Transverse colon (tissue), 4 donors: ENCODE measurements at regions of chr6 and their contacts with region 1.

Region 1: DNA sequence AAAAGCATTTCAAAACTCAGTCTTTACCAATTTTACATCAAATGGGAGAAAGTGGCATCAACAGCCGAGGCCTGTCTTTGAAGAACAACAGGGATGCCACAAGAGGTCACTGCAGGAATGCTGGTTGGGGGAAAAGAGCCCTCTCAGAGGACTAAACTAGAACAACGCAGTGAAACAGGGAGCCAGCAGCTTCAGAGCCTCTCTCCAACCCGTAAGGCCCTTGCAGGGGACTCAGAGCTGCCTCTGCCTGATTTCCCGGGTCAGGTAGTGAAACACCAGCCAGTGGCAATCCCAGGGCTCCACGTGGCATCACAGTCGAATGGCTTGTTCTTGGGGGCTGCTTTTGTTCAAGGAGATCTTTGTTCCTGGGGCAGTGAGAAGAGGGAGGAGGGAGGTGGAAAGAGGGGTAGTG is 55.0 kb upstream of the KCNK16 start:
- DNase-seq: peak; percentile 73
- H3K4me3 ChIP-seq: no peak overlapping the region
- H3K27ac ChIP-seq: no peak overlapping the region
- H3K4me1 ChIP-seq: peaks cover 0 to 3% (median 0%) of the 10 kb centered on the region in 4 donors
- H3K27me3 ChIP-seq: no peaks in the 10 kb centered on the region
- CTCF ChIP-seq: peak; percentile 57 to 74 (median 62)
- EP300 ChIP-seq: no peak
- POLR2A ChIP-seq: no peak

Region 2: GRCh38 chr6:39389484-39389767 is 11.9 kb after region 1 on chr6:
- in situ Hi-C with region 1: no loop called
- intact Hi-C with region 1: no loop called
- DNase-seq: no peak
- H3K4me3 ChIP-seq: no peak overlapping the region
- H3K27ac ChIP-seq: no peak overlapping the region
- H3K4me1 ChIP-seq: no peaks in the 10 kb centered on the region
- H3K27me3 ChIP-seq: no peaks in the 10 kb centered on the region
- CTCF ChIP-seq: peak in 2 of 5 experiments; percentile 16 to 29
- EP300 ChIP-seq: no peak
- POLR2A ChIP-seq: no peak

Region 3: GRCh38 chr6:39407446-39407993 is 30.0 kb after region 1 on chr6:
- in situ Hi-C with region 1: no loop called
- intact Hi-C with region 1: no loop called
- DNase-seq: no peak
- H3K4me3 ChIP-seq: no peak overlapping the region
- H3K27ac ChIP-seq: no peak overlapping the region
- H3K4me1 ChIP-seq: no peaks in the 10 kb centered on the region
- H3K27me3 ChIP-seq: no peaks in the 10 kb centered on the region
- CTCF ChIP-seq: no peak
- EP300 ChIP-seq: no peak
- POLR2A ChIP-seq: no peak

Region 4: GRCh38 chr6:39610221-39610620 is 232.7 kb after region 1 on chr6:
- in situ Hi-C with region 1: no loop called
- intact Hi-C with region 1: no loop called
- DNase-seq: no peak
- H3K4me3 ChIP-seq: no peak overlapping the region
- H3K27ac ChIP-seq: peak overlapping the region in 3 of 4 donors; percentile 3 to 25 (median 20)
- H3K4me1 ChIP-seq: no peaks in the 10 kb centered on the region
- H3K27me3 ChIP-seq: no peaks in the 10 kb centered on the region
- CTCF ChIP-seq: no peak
- EP300 ChIP-seq: no peak
- POLR2A ChIP-seq: no peak

Region 5: DNA sequence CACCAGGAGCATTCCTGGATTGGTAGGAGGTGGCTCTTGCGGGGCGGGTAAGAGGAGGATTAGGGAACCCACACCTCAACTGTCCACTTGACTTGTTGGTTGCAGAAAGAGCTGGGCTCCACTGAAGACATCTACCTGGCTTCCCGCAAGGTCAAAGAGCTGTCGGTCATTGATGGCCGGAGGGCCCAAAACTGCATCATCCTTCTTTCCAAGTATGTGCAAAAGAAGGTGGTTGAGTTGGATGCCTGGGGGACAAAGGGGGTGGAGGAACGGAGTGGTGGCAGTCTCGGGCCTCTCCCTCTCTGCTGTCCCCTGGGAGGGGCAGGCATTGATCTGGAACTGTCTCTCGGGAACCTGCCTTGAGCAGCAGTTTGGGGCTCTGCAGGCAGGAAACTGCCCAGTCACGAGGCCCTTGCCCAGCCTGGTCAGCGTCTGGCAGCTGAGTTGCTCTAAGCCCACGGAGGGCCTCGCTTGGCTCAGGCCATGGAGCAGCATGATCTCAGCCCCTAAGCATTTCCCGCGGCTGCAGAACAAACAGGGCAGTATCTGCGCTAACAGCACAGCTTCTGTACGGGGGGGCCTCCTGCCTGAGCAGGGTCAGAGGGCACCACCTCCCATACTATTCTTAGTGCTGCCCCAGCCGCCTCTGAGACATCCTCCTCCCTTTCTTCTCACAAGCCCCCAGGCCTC is 510.0 kb after region 1 on chr6:
- in situ Hi-C with region 1: loop called (anchors 10 to 25 kb)
- intact Hi-C with region 1: loop called (anchors 10 kb)
- DNase-seq: peak; percentile 38
- H3K4me3 ChIP-seq: no peak overlapping the region
- H3K27ac ChIP-seq: peak overlapping the region; percentile 50 to 70 (median 64)
- H3K4me1 ChIP-seq: peaks cover 4 to 12% (median 4%) of the 10 kb centered on the region in 4 donors
- H3K27me3 ChIP-seq: no peaks in the 10 kb centered on the region
- CTCF ChIP-seq: no peak
- EP300 ChIP-seq: no peak
- POLR2A ChIP-seq: no peak

Region 6: GRCh38 chr6:39892490-39893129 is 515.1 kb after region 1 on chr6:
- in situ Hi-C with region 1: loop called (anchors 10 to 25 kb)
- intact Hi-C with region 1: loop called (anchors 10 kb)
- DNase-seq: peak; percentile 66
- H3K4me3 ChIP-seq: no peak overlapping the region
- H3K27ac ChIP-seq: no peak overlapping the region
- H3K4me1 ChIP-seq: peaks cover 0 to 10% (median 2%) of the 10 kb centered on the region in 4 donors
- H3K27me3 ChIP-seq: no peaks in the 10 kb centered on the region
- CTCF ChIP-seq: peak; percentile 51 to 69 (median 65)
- EP300 ChIP-seq: no peak
- POLR2A ChIP-seq: no peak